ENCODE measurements at regions of chr11 and their contacts with region 1.

Region 1: GRCh38 chr11:122706291-122707088 is 51.0 kb downstream of the UBASH3B start:
- DNase-seq: no peak
- H3K4me3 ChIP-seq: no peak overlapping the region
- H3K4me3 Mint-ChIP-seq: no peak overlapping the region
- H3K27ac ChIP-seq: no peak overlapping the region
- H3K27ac Mint-ChIP-seq: peak overlapping the region in 1 of 8 donors; percentile 19
- H3K4me1 ChIP-seq: no peaks in the 10 kb centered on the region
- H3K4me1 Mint-ChIP-seq: peaks cover 29 to 49% (median 38%) of the 10 kb centered on the region in 3 donors
- H3K27me3 ChIP-seq: no peaks in the 10 kb centered on the region
- H3K27me3 Mint-ChIP-seq: no peaks in the 10 kb centered on the region

Region 2: GRCh38 chr11:122453586-122453985 is 252.9 kb before region 1 on chr11:
- CTCF ChIA-PET with region 1: no interaction called
- POLR2A ChIA-PET with region 1: no interaction called
- DNase-seq: no peak
- H3K4me3 ChIP-seq: no peak overlapping the region
- H3K4me3 Mint-ChIP-seq: no peak overlapping the region
- H3K27ac ChIP-seq: no peak overlapping the region
- H3K27ac Mint-ChIP-seq: no peak overlapping the region
- H3K4me1 ChIP-seq: no peaks in the 10 kb centered on the region
- H3K4me1 Mint-ChIP-seq: no peaks in the 10 kb centered on the region
- H3K27me3 ChIP-seq: no peaks in the 10 kb centered on the region
- H3K27me3 Mint-ChIP-seq: peaks cover 0 to 13% of the 10 kb centered on the region in 2 donors

Region 3: DNA sequence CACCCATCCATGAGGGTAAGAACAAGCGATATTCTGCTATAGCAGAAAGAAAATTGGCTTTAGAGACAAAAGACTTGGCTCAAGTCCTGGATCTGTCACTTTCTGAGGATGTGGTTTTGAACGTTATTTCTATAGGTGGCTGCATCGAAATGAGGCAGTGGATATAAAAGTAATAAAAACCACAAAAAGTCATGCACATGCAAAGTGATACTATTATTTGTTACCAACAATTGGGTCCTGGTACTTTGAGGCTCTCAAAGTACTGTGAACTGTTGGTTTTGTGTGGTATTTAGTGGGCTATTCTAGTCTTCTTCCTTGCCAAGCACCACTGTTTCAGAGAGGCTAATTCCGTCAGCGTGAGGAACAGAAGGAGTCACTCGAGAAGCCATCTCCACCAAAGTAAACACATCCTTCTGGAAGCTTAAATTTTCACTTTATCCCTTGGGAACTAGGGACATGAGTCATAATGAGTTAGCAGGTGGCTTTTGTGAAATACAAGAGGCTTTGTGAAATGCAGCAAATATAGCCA is 37.9 kb before region 1 on chr11:
- CTCF ChIA-PET with region 1: no interaction called
- POLR2A ChIA-PET with region 1: interaction called, 15 read pairs
- DNase-seq: peak in 2 of 5 donors; percentile 41 to 51
- H3K4me3 ChIP-seq: peak overlapping the region; percentile 27
- H3K4me3 Mint-ChIP-seq: peak overlapping the region in 6 of 7 donors; percentile 25 to 78 (median 52)
- H3K27ac ChIP-seq: no peak overlapping the region
- H3K27ac Mint-ChIP-seq: peak overlapping the region; percentile 33 to 94 (median 88)
- H3K4me1 ChIP-seq: peaks cover 63% of the 10 kb centered on the region
- H3K4me1 Mint-ChIP-seq: peaks cover 57 to 81% (median 71%) of the 10 kb centered on the region in 3 donors
- H3K27me3 ChIP-seq: no peaks in the 10 kb centered on the region
- H3K27me3 Mint-ChIP-seq: no peaks in the 10 kb centered on the region

Region 4: DNA sequence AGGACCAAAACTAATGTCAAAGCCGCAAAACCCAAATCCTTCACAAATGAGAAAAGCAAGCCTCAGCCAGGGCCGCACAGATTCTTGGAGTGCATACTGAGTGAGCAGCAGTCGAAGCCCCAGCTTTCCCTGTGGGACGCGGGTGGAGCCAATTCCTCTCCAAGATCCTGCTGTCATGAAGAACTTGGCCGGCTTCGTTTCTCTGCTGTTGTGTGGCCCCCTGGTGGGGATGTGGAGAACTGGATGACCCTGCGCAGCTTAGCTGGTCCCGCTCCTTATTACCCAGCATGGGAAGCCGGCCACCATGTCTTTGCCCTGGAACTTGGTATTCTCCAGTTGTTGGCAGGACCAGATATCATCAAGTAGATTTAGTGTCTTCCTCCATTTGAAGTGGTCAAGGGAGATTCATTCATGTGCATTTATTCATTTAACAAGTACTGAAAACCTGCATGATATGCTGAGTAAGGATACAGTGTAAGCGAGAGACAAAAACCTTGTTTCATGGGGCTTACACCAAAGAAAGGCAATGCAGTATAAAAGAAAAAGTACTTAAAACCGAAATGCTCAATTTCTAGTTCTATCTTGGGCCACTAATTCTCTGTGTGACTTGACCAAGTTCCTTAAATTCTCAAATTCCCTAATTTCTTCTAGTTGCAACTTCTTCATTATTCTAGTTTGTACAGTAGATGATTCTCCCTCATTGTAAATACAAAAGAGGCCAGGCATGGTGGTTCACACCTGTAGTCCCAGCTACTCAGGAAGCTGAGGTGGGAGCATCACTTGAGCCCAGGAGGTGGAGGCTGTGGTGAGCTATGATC is 75.1 kb after region 1 on chr11:
- CTCF ChIA-PET with region 1: no interaction called
- POLR2A ChIA-PET with region 1: no interaction called
- DNase-seq: peak; percentile 51 to 78 (median 56)
- H3K4me3 ChIP-seq: no peak overlapping the region
- H3K4me3 Mint-ChIP-seq: no peak overlapping the region
- H3K27ac ChIP-seq: no peak overlapping the region
- H3K27ac Mint-ChIP-seq: peak overlapping the region in 2 of 8 donors; percentile 29 to 60
- H3K4me1 ChIP-seq: no peaks in the 10 kb centered on the region
- H3K4me1 Mint-ChIP-seq: peaks cover 5 to 7% (median 6%) of the 10 kb centered on the region in 3 donors
- H3K27me3 ChIP-seq: no peaks in the 10 kb centered on the region
- H3K27me3 Mint-ChIP-seq: peaks cover 0 to 3% of the 10 kb centered on the region in 2 donors

Measured in CD8-positive, alpha-beta memory T cell (primary cell).